AG04450 (cell line): ENCODE measurements at regions of chr1 and their contacts with region 1.

Region 1: DNA sequence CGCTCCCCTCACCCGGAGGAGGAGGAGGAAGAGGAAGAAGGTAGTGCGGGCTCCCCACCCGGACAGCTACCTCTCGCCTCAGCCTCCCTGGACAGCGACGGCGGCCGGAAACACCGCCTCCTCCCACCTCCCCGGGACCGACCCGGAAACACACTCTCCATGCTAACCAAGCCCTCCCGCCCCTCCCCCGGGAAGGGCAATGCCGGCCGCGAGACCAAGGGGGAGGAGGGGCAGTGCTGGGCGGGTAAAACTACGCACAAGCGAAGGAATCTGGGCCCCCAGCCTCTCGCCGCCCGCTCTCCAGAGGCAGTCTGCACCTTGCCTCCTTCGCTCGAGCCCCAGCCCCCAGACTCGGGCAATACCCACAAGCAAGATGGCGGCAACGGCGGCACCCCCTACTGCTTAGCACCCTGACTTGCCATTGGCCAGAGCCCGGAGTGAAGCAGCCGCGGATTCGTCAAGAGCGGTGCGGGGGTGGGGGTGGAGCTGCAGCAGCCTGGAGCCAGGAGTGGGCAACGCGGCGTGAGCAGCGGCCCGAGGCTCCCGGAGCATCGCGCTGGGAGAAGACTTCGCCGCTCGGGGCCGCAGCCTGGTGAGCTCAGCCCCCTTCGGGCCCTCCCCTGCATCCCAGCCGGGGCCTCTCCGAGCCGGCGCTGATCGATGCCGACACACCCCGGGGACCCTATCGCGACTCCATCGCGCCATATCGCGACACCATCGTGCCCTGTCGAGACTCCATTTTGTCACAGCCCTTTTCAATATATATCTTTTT is at the starts of genes KIAA0319L and NCDN:
- DNase-seq: peak; percentile 95
- H3K4me3 ChIP-seq: peak within 1 kb of the TSS; percentile 96
- H3K27ac ChIP-seq: peak within 1 kb of the TSS; percentile 95
- H3K27me3 ChIP-seq: no peaks in the 10 kb centered on the region
- CTCF ChIP-seq: no peak
- polyA plus RNA-seq, gene KIAA0319L: 53.2 and 69.5 TPM in 2 replicates
- polyA plus RNA-seq, gene NCDN: 16.7 and 22.6 TPM in 2 replicates

Region 2: GRCh38 chr1:35769188-35769758 is 211.8 kb after region 1 on chr1:
- CTCF ChIA-PET with region 1: no interaction called
- POLR2A ChIA-PET with region 1: interaction called, 16 read pairs
- DNase-seq: peak; percentile 55
- H3K4me3 ChIP-seq: peak overlapping the region; percentile 78
- H3K27ac ChIP-seq: peak overlapping the region; percentile 70
- H3K27me3 ChIP-seq: no peaks in the 10 kb centered on the region
- CTCF ChIP-seq: peak; percentile 36